Panc1 (cell line): ENCODE measurements at regions of chr20 and their contacts with region 1.

Region 1: GRCh38 chr20:46681032-46681854 is 8.0 kb downstream of the TP53RK start:
- DNase-seq: peak; percentile 61
- ATAC-seq: peak; percentile 78
- H3K4me3 ChIP-seq: no peak overlapping the region
- H3K27ac ChIP-seq: no peak overlapping the region
- H3K4me1 ChIP-seq: no peaks in the 10 kb centered on the region; the same call in 1 of the 2 replicates
- H3K27me3 ChIP-seq: no peaks in the 10 kb centered on the region
- CTCF ChIP-seq: peak; percentile 89

Region 2: GRCh38 chr20:46375771-46376170 is 305.5 kb before region 1 on chr20:
- CTCF ChIA-PET with region 1: no interaction called
- POLR2A ChIA-PET with region 1: interaction called, 10 read pairs
- in situ Hi-C with region 1: no loop called
- intact Hi-C with region 1: no loop called
- DNase-seq: no peak
- ATAC-seq: no peak
- H3K4me3 ChIP-seq: no peak overlapping the region
- H3K27ac ChIP-seq: no peak overlapping the region
- H3K4me1 ChIP-seq: no peaks in the 10 kb centered on the region
- H3K27me3 ChIP-seq: no peaks in the 10 kb centered on the region
- CTCF ChIP-seq: no peak

Region 3: DNA sequence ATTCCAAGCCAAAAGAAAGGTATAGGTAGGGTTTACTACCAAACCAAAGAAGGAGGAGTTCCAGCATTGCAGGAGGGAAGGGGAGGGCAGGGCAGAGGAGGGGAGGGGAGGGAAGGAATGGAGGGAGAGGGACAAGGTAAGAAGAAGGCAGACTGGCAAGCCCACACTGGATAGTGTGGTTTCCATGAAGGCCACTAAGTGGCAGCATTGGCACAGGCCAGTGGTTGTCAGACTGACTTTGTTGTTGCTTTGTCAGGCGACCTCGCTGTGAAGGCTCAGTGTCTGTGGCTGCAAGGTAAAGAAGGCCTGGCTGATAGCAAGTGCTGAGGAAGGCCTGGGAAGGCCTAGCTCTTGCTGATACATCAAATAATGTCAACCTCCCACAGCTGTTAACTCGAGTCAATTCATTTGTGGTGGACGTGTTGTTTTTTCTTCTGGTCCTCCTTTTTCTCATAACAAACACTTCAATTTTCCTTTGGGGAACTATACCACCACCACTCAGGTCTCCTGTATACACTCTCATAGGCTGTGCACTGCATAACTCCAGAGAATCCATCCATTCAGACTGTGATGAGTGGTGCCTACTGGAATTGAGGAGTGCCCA is 160.2 kb before region 1 on chr20:
- CTCF ChIA-PET with region 1: no interaction called
- POLR2A ChIA-PET with region 1: no interaction called
- in situ Hi-C with region 1: no loop called
- intact Hi-C with region 1: loop called (anchors 2 kb)
- DNase-seq: peak; percentile 20
- ATAC-seq: peak; percentile 92
- H3K4me3 ChIP-seq: no peak overlapping the region
- H3K27ac ChIP-seq: no peak overlapping the region
- H3K4me1 ChIP-seq: no peaks in the 10 kb centered on the region
- H3K27me3 ChIP-seq: peaks cover 3% of the 10 kb centered on the region; the same call in 1 of the 2 replicates
- CTCF ChIP-seq: peak; percentile 81

Region 4: DNA sequence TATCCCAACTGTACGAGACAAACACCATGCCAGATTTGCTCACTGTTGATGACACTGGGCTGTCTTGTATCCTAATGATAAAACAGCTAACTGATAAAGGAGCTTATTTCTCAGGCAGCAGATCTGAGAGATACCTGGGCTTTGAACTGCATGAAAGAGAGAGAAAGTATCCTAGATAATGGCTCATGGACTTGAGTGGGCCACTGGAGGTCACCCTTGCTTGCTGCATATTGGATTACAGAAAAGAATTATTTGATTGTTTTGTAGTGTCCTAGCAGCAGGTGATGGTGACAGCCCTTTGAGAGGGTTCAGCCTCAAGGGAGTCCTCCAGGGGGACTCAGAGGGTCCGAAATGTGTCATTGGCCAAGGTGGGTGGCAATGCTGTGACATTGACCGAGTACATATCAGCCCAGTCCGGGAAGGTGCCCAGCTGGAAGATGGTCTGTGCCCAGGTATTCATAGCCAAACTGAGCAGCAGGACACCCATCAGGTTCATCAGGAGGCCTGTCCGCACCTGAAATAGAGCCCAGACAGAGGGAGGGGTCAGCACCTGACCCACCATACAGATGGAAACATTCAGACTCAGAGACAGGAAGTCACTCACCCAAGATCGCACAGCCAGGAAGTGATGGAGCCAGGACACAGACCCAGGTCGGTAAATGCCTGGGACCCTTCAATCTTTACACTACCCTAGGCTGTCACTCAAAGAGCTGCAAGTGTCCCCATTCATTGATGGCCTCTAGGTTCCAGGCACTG is 121.4 kb before region 1 on chr20:
- CTCF ChIA-PET with region 1: interaction called, 5 read pairs
- POLR2A ChIA-PET with region 1: no interaction called
- in situ Hi-C with region 1: no loop called
- intact Hi-C with region 1: loop called (anchors 2 kb)
- DNase-seq: no peak
- ATAC-seq: no peak
- H3K4me3 ChIP-seq: no peak overlapping the region
- H3K27ac ChIP-seq: no peak overlapping the region
- H3K4me1 ChIP-seq: peaks cover 4% of the 10 kb centered on the region; the same call in 1 of the 2 replicates
- H3K27me3 ChIP-seq: peaks cover 3% of the 10 kb centered on the region
- CTCF ChIP-seq: peak; percentile 54; the same call in 1 of the 2 replicates

Region 5: DNA sequence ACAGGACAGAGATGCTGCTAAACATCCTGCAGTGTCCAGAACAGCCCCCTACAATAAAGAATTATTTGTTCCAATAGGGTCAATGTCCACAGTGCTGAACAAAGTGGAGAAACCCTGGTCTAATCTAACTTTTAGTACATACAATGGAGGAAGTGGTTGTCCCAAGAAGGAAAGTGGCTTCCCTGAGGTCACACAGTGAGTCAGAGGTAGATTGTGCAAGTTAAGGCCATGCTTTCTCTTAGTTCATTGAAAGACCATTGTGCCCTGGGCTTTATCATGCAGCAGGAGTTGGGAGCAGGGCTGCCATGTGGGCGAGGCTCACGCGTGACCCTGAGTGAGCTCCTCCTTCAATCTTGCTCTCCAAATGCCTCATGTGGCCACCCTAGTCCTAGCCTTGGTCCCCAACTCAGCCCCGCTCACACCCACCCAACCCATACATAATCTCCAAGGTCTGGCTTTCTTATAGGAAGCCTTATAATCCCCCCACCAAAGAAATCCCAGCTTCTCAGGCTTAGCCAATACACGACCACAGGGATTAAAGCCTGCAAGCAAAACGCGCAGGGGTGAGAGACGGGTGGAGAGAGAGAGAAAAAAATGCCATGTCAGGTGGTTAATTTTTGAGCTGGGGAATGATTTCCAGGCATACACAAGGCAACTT is 49.9 kb before region 1 on chr20:
- CTCF ChIA-PET with region 1: no interaction called
- POLR2A ChIA-PET with region 1: no interaction called
- in situ Hi-C with region 1: no loop called
- intact Hi-C with region 1: no loop called
- DNase-seq: no peak
- ATAC-seq: no peak
- H3K4me3 ChIP-seq: no peak overlapping the region
- H3K27ac ChIP-seq: no peak overlapping the region
- H3K4me1 ChIP-seq: no peaks in the 10 kb centered on the region
- H3K27me3 ChIP-seq: no peaks in the 10 kb centered on the region
- CTCF ChIP-seq: no peak